GM10248 (cell line): ENCODE measurements at regions of chr2 and their contacts with region 1.

Region 1: DNA sequence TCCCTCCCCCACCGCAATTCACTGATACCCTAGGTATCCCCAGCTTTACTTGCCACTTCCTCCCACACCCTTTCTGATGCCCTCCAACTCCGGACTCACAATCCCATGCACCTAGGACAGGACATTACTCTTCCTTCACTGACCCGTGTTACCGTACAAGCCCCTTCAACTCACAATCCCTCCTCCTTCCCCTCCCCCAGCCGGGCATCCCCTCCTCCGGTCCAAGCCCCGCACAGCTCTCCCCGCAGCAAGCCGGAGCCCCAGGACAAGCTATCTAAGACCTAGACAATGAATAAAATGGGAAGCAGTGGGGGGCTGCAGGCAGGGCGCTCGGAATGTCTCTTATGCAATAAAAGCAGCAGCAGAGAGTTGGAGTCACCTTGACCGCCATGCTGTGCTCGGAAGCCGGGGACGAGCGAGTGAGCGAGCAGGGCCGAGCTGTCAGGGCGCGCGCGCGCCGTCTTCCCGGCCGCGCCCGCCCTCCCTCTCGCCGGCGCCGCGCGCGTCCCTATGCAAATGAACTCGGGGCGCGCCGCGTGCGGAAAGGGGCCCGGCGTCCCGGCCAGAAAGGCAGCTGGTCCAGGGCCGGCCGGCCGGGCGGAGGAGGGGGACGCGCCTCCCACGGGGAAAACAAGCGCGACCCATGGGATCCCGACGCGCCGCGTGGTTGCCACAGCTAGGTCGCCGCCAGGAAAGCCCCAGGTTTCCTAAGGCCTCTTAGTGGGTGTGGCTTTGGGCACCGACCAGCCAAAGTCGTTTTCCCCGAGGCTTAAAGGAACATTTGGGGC is at the start of gene SLC25A12:
- DNase-seq: peak; percentile 94
- CTCF ChIP-seq: no peak

Region 2: DNA sequence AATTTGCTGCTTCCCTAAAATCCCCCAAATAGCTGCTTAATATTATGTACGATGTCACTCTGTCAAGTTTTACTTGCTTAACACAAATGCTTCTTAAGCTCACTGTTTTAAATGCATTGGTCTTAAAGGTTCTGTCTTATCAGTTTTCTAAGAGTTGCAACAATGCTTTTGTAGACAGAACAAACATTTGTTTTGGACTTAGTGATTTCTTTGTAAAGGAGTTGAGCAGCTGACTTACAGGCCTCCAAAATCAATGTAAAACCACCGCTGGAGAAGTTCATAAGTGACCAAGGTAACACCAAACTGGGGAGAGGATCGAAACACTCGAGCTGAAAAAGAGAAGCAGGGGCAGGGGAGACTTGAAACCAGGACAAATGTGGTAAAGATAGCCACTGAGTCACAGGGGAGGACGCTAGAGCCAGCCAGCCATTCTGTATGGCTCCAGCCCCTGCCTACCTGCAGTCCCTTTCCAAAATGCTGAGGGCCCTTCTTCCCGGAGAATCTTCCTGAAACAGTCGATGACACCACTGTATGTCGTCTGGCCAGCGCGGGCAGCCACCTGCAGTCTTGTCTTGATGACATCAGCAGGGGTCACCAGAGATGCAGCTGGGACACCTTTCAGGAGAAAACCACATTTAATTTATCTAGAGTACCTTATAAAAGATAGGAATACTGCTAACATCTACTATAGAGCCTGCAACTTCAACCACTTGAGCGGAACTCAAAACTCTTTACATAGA is 106.5 kb before region 1 on chr2:
- CTCF ChIA-PET with region 1: no interaction called
- POLR2A ChIA-PET with region 1: no interaction called
- DNase-seq: no peak
- CTCF ChIP-seq: no peak

Region 3: DNA sequence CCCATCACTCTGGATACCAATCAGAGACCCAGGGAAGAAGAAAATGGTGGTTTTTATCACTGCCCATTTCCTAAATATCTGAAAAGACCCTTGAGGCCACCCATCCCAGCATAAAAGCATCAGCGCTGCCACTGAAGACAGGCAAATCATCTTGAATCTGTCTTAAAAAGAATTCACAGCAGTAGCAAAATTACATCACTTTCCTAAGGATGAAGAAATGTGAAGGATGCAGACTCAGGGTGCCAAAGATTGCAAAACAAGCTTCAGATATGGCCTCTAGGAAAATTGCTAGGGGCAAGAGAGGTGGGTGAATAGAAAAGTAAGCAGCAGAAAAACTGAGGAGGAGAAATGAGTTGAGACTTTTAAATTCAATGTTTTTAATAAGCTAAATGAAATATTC is 69.9 kb before region 1 on chr2:
- CTCF ChIA-PET with region 1: no interaction called
- POLR2A ChIA-PET with region 1: no interaction called
- DNase-seq: no peak
- CTCF ChIP-seq: no peak

Region 4: DNA sequence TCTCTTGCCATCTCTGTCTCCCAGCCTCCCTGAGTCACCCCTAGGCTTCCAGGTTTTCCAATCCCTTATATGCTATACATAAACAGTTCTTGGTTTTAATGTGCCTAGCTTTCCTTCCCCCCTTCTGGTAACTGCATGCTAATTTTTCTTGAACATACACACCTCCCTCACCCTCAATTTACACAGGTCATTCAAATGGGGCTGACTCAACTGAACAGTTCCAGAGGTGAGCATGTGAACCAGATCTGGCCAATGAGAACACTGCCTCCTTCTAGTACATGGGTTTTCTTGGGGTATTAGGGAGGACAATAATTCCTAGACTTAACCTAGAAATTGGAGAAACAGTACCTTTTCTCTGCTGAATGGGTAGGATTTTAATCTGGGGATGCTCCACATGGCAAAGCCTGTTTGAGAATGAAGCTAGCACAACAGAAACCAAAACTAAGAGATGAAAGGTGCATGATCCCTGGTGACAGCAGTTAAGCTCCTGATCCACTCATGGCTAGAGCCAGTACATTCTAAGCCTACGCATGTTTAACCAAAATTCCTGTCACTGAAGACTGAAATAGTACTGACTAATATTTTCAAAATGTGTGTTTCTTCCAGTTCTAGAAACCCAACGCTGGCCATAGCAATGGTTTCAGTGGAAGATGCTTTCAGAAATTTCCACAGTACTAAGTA is 11.8 kb before region 1 on chr2:
- CTCF ChIA-PET with region 1: interaction called, 17 read pairs
- POLR2A ChIA-PET with region 1: no interaction called
- DNase-seq: no peak
- CTCF ChIP-seq: no peak

Region 5: GRCh38 chr2:171909266-171909665 is 15.2 kb after region 1 on chr2:
- CTCF ChIA-PET with region 1: no interaction called
- POLR2A ChIA-PET with region 1: no interaction called
- DNase-seq: no peak
- CTCF ChIP-seq: no peak

Region 6: DNA sequence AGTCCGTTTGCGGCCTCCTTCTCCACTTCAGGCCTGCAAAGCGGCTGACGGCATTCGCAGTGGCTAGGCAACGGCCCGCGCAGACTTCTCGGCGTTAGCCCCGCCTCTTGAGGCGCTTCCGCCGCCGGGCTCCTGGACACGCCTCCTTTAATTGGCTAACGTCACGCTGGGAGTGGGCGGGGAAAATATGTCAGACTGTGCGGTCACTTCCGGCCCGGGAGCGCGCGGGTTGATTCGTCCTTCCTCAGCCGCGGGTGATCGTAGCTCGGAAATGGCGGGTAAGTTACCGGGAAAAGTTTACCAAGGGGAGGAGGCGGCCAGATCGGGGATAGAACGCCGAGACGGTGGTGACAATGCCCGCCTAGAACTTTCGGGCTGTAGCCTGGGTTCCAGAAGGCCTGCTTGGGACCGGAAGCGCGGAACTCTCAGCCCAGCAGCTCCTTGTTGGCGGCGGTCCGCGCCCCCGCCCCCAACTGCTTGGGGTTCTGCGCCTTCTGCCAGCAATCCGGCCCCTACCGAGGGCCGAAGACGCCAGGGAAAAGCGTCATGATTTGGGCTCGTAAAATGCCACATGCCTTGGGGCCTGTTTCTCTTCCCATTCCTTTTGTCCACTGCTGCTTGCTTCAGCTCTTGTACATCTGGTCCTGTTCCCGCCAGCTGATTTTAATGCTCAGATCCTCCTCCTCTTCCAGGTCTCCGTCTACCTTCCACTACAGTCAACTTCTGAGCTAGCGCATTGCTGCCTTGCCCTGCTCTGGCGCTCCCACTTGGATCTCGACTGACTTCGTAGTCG is 28.4 kb after region 1 on chr2 and contains the start of gene HAT1:
- CTCF ChIA-PET with region 1: interaction called, 14 read pairs
- POLR2A ChIA-PET with region 1: interaction called, 3 read pairs
- DNase-seq: peak; percentile 98
- CTCF ChIP-seq: no peak